CD14-positive monocyte (primary cell): ENCODE measurements at regions of chr17 and their contacts with region 1.

Region 1: GRCh38 chr17:49556223-49556971 is 19.3 kb upstream of the NXPH3 start:
- DNase-seq: peak; percentile 52 to 63 (median 58)
- H3K4me3 ChIP-seq: no peak overlapping the region
- H3K4me3 Mint-ChIP-seq: peak overlapping the region in 1 of 2 donors; percentile 21
- H3K27ac ChIP-seq: no peak overlapping the region
- H3K27ac Mint-ChIP-seq: no peak overlapping the region
- H3K4me1 ChIP-seq: peaks cover 4 to 5% of the 10 kb centered on the region in 2 donors
- H3K4me1 Mint-ChIP-seq: peaks cover 11% of the 10 kb centered on the region
- H3K27me3 ChIP-seq: no peaks in the 10 kb centered on the region
- H3K27me3 Mint-ChIP-seq: peaks cover 1 to 17% (median 13%) of the 10 kb centered on the region in 3 donors
- CTCF ChIP-seq: peak; percentile 97

Region 2: GRCh38 chr17:49299996-49300395 is 256.4 kb before region 1 on chr17:
- intact Hi-C with region 1: loop called in 1 of 2 experiments (anchors 10 kb)
- DNase-seq: no peak
- H3K4me3 ChIP-seq: no peak overlapping the region
- H3K4me3 Mint-ChIP-seq: no peak overlapping the region
- H3K27ac ChIP-seq: no peak overlapping the region
- H3K27ac Mint-ChIP-seq: peak overlapping the region in 1 of 7 donors; percentile 30
- H3K4me1 ChIP-seq: no peaks in the 10 kb centered on the region
- H3K4me1 Mint-ChIP-seq: no peaks in the 10 kb centered on the region
- H3K27me3 ChIP-seq: no peaks in the 10 kb centered on the region
- H3K27me3 Mint-ChIP-seq: no peaks in the 10 kb centered on the region
- CTCF ChIP-seq: no peak

Region 3: DNA sequence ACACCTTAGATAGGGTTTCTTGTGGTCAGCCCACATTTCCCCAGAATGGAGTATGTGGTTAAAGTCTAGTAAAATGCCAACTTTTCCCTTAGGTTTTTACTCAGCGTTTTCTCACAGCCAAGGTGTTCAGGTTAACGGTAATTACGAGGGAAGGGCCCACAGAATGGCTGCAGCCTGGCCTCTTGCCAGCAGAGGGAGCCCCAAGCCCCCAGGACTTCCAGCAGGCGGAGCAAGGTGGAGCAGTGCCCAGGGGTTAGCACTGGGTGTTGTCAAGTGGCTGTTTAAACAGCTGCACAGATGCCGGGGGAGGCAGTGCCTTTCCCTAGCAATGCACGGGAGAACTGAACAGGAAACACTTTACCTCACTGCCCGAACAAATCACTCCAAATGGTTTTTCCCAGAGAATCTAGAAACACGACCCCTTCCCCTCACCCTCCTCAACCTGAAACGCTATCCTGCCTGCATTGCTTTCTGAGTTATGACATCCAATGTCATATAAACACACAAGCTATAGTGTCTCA is 148.4 kb before region 1 on chr17:
- intact Hi-C with region 1: loop called (anchors 2 kb)
- DNase-seq: peak; percentile 47 to 61 (median 56)
- H3K4me3 ChIP-seq: no peak overlapping the region
- H3K4me3 Mint-ChIP-seq: no peak overlapping the region
- H3K27ac ChIP-seq: no peak overlapping the region
- H3K27ac Mint-ChIP-seq: no peak overlapping the region
- H3K4me1 ChIP-seq: peaks cover 0 to 12% of the 10 kb centered on the region in 2 donors
- H3K4me1 Mint-ChIP-seq: peaks cover 20% of the 10 kb centered on the region
- H3K27me3 ChIP-seq: no peaks in the 10 kb centered on the region
- H3K27me3 Mint-ChIP-seq: peaks cover 0 to 2% (median 1%) of the 10 kb centered on the region in 3 donors
- CTCF ChIP-seq: peak; percentile 96

Region 4: DNA sequence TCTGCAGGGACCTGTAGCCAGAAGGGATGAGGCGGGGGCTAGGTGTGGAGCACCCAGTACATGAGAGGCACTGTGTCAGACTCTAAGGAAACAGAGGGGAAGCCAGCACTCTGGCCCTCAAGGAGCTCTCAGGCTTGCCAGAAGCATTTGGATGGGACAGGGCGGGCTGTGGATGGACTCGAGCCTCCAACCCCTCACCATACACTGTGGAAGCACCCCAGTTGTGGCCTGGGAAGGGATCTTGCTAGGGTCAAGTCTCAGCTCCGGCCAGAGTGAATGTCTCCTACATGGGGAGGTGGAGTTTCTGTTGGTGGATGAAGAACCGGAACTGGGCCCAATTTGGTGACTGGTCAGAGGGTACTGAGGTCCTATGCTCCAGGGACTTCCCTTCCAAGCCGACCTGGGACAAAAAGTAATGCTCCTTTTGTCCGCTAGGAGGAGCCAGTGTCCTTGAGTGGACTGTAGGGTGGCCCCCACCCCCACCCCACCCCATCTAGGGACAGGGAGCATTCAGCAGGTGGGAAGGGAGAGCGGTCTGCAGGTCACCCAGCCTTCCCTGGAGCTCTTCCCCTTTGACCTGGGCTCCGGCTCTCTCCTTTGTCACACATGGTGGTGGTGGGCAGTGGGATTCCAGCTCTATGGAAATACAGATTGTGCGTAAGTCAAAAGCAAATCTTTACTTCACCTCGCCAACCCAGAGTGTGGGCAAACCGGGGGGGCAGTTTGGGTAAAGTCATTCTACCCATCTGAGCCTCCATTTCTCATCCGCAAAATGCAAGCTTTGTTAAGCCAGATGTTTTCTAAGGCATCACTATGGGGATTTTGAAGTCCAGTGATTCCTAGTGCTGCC is 121.4 kb before region 1 on chr17:
- intact Hi-C with region 1: loop called in 1 of 2 experiments (anchors 10 kb)
- DNase-seq: peak; percentile 31 to 62 (median 39)
- H3K4me3 ChIP-seq: no peak overlapping the region
- H3K4me3 Mint-ChIP-seq: no peak overlapping the region
- H3K27ac ChIP-seq: no peak overlapping the region
- H3K27ac Mint-ChIP-seq: peak overlapping the region in 1 of 7 donors; percentile 60
- H3K4me1 ChIP-seq: peaks cover 12 to 15% of the 10 kb centered on the region in 2 donors
- H3K4me1 Mint-ChIP-seq: peaks cover 15% of the 10 kb centered on the region
- H3K27me3 ChIP-seq: peaks cover 0 to 7% of the 10 kb centered on the region in 2 donors
- H3K27me3 Mint-ChIP-seq: peaks cover 23 to 27% (median 24%) of the 10 kb centered on the region in 3 donors
- CTCF ChIP-seq: peak; percentile 82

Region 5: DNA sequence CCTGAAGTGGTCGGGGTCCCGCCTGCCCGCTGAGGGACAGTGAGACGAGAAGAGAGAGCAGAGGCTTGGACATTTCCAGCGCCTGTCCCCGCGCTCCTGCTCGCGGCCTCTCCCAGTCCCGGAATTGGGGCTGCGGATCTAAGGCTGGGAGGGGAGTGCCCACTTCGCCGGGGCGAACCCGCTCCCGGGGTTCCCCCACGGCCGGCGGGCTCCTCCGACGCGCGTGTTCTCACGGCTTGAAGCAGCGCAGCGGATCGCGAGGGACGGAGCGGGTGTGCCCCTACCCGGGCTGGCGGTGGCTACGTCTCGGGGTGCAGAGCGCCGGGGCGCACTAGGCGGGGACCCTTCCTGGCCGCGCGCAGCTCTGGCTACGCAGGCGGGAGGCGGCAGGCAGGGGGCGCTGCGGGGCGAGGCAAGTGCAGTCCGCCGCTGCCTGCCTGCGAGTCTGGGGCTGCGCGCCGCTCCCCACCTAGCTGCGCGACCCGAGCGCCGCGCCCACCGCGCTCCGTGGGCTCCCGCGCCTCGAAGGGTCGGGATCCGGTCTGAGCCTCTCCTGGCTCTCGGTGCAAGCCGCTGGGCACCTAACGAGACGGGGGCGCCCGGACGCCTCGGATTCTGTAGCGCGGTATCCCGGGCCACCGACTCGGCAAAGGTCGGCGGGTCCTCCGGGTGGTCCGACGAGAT is 60.1 kb before region 1 on chr17:
- intact Hi-C with region 1: loop called in 1 of 2 experiments (anchors 5 kb)
- DNase-seq: peak; percentile 47 to 67 (median 60)
- H3K4me3 ChIP-seq: peak overlapping the region in 1 of 3 experiments; percentile 74
- H3K4me3 Mint-ChIP-seq: peak overlapping the region; percentile 72 to 80
- H3K27ac ChIP-seq: no peak overlapping the region
- H3K27ac Mint-ChIP-seq: no peak overlapping the region
- H3K4me1 ChIP-seq: peaks cover 23 to 33% of the 10 kb centered on the region in 2 donors
- H3K4me1 Mint-ChIP-seq: peaks cover 25% of the 10 kb centered on the region
- H3K27me3 ChIP-seq: peaks cover 58 to 78% of the 10 kb centered on the region in 2 donors
- H3K27me3 Mint-ChIP-seq: peaks cover 75 to 88% (median 81%) of the 10 kb centered on the region in 3 donors
- CTCF ChIP-seq: peak; percentile 94

Region 6: GRCh38 chr17:49730078-49730784 is 173.8 kb after region 1 on chr17:
- intact Hi-C with region 1: no loop called
- DNase-seq: no peak
- H3K4me3 ChIP-seq: no peak overlapping the region
- H3K4me3 Mint-ChIP-seq: no peak overlapping the region
- H3K27ac ChIP-seq: peak overlapping the region in 1 of 2 donors; percentile 29
- H3K27ac Mint-ChIP-seq: peak overlapping the region in 3 of 7 donors; percentile 72 to 80 (median 75)
- H3K4me1 ChIP-seq: peaks cover 32 to 47% of the 10 kb centered on the region in 2 donors
- H3K4me1 Mint-ChIP-seq: peaks cover 61% of the 10 kb centered on the region
- H3K27me3 ChIP-seq: no peaks in the 10 kb centered on the region
- H3K27me3 Mint-ChIP-seq: no peaks in the 10 kb centered on the region
- CTCF ChIP-seq: no peak